ENCODE measurements at regions of chr13 and their contacts with region 1.

Region 1: GRCh38 chr13:33312150-33312860 is 26.8 kb upstream of the STARD13 start:
- DNase-seq: no peak
- H3K4me3 ChIP-seq: no peak overlapping the region
- H3K27ac ChIP-seq: no peak overlapping the region
- H3K4me1 ChIP-seq: peaks cover 0 to 10% (median 0%) of the 10 kb centered on the region in 4 donors
- H3K27me3 ChIP-seq: no peaks in the 10 kb centered on the region
- CTCF ChIP-seq: peak in 3 of 5 experiments; percentile 11 to 17 (median 14)
- EP300 ChIP-seq: no peak
- POLR2A ChIP-seq: no peak

Region 2: GRCh38 chr13:34941835-34942731 is 1629.8 kb after region 1 on chr13 and contains the start of gene NBEA:
- in situ Hi-C with region 1: no loop called
- intact Hi-C with region 1: loop called (anchors 5 kb)
- DNase-seq: peak; percentile 79
- H3K4me3 ChIP-seq: peak within 1 kb of the TSS; percentile 38 to 92 (median 72)
- H3K27ac ChIP-seq: peak within 1 kb of the TSS; percentile 73 to 90 (median 83)
- H3K4me1 ChIP-seq: peaks cover 0 to 19% (median 6%) of the 10 kb centered on the region in 4 donors
- H3K27me3 ChIP-seq: peaks cover 17% of the 10 kb centered on the region
- CTCF ChIP-seq: peak; percentile 24 to 56 (median 31)
- EP300 ChIP-seq: no peak
- POLR2A ChIP-seq: no peak
- total RNA-seq, gene NBEA: 8.2 to 21.1 (median 12.5) TPM

Measured in transverse colon (tissue), 4 donors.